AG04449 (cell line): ENCODE measurements at regions of chr15 and their contacts with region 1.

Region 1: DNA sequence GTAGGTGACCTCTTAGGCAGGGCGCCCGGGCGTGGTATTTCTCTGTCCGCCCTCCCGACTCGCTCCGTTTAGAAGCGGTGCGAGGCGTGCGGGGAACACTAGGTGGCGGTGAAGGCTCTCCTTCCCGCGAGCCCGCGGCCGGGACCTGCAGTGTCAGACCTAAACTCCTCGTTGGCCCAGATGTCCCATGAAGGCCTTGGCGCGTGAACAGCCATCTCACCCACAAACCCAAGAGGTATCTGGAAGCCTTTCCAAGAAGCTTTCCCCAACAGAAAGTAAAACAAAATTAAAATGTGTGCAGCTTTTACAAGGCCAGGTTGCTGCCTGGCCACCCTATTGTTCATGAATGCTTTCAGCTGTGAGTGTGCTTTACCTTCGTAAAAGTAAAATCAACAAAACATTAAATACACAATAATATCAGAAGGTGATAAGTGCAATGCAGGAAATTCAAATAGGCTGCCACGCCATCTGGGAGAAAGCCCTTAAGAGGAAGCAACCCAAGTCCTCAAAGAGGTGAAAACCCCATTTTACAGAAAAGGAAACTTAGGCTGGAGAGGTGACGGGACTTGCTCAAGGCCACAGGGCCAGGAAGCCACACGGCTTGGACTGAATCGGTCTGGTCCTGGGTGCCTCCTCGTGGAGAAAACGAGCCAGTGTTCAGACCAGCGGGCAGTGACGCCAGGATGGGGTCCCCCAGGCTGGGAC is 120.3 kb downstream of the ETFA start:
- DNase-seq: no peak
- H3K4me3 ChIP-seq: peak overlapping the region; percentile 30
- CTCF ChIP-seq: peak; percentile 95

Region 2: DNA sequence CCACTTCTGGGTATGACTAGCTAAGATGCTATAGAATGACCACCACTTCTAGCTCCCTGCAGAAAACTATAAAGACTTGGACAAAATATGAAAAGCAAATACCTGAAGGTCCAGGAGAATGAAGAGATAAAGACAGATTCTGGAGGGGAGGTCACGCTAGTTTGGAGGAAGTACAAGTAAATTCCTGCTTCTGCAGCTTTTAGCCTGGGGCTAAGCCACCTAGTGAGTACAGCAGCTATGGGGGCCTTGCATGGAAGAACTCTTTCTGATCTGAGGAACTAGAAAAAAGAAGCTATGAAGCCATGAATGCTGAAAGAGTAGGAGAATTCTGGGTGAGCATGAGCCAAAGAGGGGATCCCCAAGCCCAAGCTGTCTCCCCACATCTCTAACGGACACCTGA is 208.5 kb before region 1 on chr15:
- CTCF ChIA-PET with region 1: no interaction called
- POLR2A ChIA-PET with region 1: no interaction called
- DNase-seq: no peak
- H3K4me3 ChIP-seq: no peak overlapping the region
- CTCF ChIP-seq: no peak

Region 3: DNA sequence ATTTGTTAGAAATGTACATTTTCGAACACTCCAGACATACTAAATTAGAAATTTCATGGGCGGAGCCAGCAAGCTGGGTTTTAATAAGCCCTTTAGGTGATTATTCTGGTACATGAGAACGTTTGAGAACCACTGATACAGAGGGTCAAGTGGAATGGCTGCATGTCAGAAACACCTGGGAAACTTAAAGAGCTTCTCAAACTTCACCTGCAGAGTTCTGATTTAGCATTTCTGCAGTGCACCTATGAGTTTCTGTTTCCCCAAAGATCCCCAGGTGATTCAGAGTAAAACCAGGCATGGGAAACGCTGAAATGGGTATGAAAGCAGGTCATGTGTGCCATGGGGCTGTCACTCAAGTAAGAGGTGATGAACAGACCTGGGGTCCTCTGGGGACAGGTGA is 63.1 kb before region 1 on chr15:
- CTCF ChIA-PET with region 1: no interaction called
- POLR2A ChIA-PET with region 1: no interaction called
- DNase-seq: no peak
- H3K4me3 ChIP-seq: no peak overlapping the region
- CTCF ChIP-seq: no peak

Region 4: GRCh38 chr15:76206325-76206976 is 15.5 kb after region 1 on chr15:
- CTCF ChIA-PET with region 1: interaction called, 16 read pairs
- POLR2A ChIA-PET with region 1: no interaction called
- DNase-seq: no peak
- H3K4me3 ChIP-seq: no peak overlapping the region
- CTCF ChIP-seq: no peak

Region 5: DNA sequence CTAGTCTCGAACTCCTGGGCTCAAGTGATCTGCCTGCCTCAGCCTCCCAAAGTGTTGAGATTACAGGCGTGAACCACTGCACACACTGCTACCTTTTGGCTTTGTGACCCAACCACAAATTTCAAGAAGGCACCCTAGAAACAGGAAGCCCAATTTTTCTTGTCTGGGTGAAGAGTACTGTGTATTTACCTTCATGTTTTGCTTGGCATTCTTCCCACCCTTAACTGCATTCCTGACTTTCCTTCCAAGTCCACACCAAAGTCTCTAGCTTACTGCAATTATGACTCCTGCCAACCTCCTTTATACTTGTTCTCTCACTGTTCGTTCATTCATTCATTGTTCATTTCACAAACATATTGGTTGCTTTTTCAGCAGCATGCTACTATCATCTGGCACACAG is 26.0 kb after region 1 on chr15:
- CTCF ChIA-PET with region 1: interaction called, 14 read pairs
- POLR2A ChIA-PET with region 1: no interaction called
- DNase-seq: peak; percentile 3
- H3K4me3 ChIP-seq: no peak overlapping the region
- CTCF ChIP-seq: no peak

Region 6: GRCh38 chr15:76235186-76235826 is 44.3 kb after region 1 on chr15:
- CTCF ChIA-PET with region 1: interaction called, 10 read pairs
- POLR2A ChIA-PET with region 1: no interaction called
- DNase-seq: peak; percentile 4
- H3K4me3 ChIP-seq: no peak overlapping the region
- CTCF ChIP-seq: peak; percentile 13

Region 7: DNA sequence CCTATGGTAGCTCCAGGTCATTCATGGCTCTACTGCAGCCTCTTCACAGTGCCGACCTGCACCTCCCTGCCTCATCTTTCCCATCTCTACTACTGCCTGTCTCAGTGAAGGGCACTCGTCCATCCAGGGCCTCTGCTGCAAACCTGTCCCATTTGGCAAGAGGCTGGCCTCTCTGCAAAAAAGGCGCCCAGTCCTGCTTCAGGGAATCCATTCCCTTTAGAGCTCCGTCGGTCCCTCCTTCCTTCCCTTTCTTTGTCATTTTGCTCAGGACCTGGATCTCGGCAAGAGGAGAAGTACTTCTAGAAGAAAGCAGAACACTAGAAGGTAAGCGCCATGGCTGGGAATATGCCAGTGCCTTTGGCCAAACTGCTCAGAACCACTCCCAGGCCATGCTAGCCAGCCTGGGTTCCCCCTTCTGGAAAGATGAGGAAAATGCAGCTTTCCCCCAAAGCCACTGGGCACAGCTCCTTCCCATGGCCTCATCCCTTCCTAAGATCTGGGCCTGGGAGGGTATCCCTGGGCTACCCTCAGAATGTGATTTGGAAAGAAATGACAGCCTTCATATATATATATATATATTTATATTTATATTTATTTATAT is 139.2 kb after region 1 on chr15:
- CTCF ChIA-PET with region 1: interaction called, 47 read pairs
- POLR2A ChIA-PET with region 1: no interaction called
- DNase-seq: no peak
- H3K4me3 ChIP-seq: no peak overlapping the region
- CTCF ChIP-seq: peak; percentile 76

Region 8: GRCh38 chr15:76336254-76337058 is 145.5 kb after region 1 on chr15 and contains the start of gene ISL2:
- CTCF ChIA-PET with region 1: interaction called, 47 read pairs
- POLR2A ChIA-PET with region 1: no interaction called
- DNase-seq: peak; percentile 81
- H3K4me3 ChIP-seq: peak within 1 kb of the TSS; percentile 62
- CTCF ChIP-seq: no peak

Region 9: GRCh38 chr15:76866716-76867321 is 675.8 kb after region 1 on chr15:
- CTCF ChIA-PET with region 1: interaction called, 41 read pairs
- POLR2A ChIA-PET with region 1: no interaction called
- DNase-seq: peak; percentile 10
- H3K4me3 ChIP-seq: no peak overlapping the region
- CTCF ChIP-seq: peak; percentile 43